ENCODE measurements at regions of chr4 and their contacts with region 1.

Region 1: GRCh38 chr4:44760142-44760898 is 34.0 kb upstream of the GNPDA2 start:
- DNase-seq: peak in 1 of 2 experiments; percentile 32
- H3K4me3 ChIP-seq: no peak overlapping the region
- H3K4me3 Mint-ChIP-seq: no peak overlapping the region
- H3K27ac Mint-ChIP-seq: no peak overlapping the region
- H3K4me1 ChIP-seq: no peaks in the 10 kb centered on the region
- H3K4me1 Mint-ChIP-seq: no peaks in the 10 kb centered on the region
- H3K27me3 ChIP-seq: no peaks in the 10 kb centered on the region
- H3K27me3 Mint-ChIP-seq: peaks cover 2% of the 10 kb centered on the region
- CTCF ChIP-seq: peak; percentile 24 to 30

Region 2: DNA sequence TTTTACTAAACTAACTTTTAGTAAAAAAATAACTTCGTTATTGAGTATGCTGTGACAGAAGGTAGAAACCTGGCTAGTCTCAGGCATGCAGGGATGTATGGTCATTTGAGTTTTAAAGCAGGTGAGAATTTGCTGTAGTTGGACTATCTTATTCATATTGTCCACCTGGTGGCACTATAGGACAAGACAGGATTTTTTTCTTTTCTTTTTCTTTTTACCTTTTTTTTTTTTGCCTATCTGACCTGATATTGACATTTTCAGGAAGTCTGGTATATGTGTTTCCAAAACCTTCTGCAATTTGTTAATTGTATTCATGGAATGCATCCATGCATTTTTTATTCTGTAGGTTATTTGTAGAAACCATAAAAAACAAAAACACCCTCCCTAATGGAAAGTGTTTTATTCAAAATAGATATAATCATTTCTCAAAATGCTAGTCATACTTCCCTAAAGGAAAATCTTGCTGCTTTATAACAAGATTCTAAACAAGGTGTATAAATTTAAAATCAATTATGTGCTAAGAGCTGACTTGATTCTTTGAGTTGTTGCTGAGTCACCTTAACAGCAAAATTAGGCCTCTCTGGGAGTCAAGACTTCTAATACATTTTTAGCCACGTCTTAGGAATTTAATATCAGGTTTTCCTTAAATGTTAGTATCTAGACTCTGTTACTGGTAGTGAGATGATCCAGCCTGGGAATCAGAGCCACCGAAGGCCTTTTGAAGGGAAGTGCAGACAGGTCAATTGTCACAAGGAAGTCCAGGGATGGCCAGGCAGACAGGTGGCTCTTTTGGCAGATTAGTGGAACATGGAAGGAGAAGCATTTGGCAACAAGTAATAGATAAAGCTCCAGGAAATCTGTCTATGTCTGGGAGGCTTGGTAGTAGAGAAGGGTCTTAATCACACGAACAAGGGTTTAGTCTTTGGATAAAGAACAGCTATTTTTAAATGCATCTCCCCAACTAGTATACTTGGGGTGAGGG is 167.4 kb after region 1 on chr4:
- CTCF ChIA-PET with region 1: no interaction called
- POLR2A ChIA-PET with region 1: no interaction called
- intact Hi-C with region 1: loop called (anchors 2 kb)
- DNase-seq: peak in 1 of 2 experiments; percentile 21
- H3K4me3 ChIP-seq: no peak overlapping the region
- H3K4me3 Mint-ChIP-seq: no peak overlapping the region
- H3K27ac Mint-ChIP-seq: no peak overlapping the region
- H3K4me1 ChIP-seq: no peaks in the 10 kb centered on the region
- H3K4me1 Mint-ChIP-seq: no peaks in the 10 kb centered on the region
- H3K27me3 ChIP-seq: no peaks in the 10 kb centered on the region
- H3K27me3 Mint-ChIP-seq: peaks cover 2% of the 10 kb centered on the region
- CTCF ChIP-seq: peak; percentile 43 to 45

Region 3: DNA sequence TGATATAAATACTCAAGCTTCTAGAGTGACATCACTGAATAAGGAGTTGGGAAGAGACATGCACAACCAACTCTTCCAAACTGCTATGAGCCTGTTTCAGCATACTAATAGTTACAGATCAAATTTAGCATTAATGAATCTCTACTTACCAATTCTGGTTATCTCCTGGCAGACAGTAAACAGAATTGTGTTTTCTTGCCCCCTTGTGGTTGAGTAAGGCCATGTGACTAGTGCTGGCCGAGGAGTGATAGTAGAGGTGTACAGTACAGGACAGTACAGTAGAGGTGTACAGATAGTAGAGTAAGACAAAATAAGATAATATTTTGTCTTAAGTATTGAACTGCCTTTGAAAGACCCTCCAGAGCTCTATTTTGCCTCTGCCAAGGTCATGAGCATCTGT is 682.1 kb after region 1 on chr4:
- CTCF ChIA-PET with region 1: no interaction called
- POLR2A ChIA-PET with region 1: no interaction called
- intact Hi-C with region 1: loop called (anchors 1 kb)
- DNase-seq: peak in 1 of 2 experiments; percentile 24
- H3K4me3 ChIP-seq: no peak overlapping the region
- H3K4me3 Mint-ChIP-seq: no peak overlapping the region
- H3K27ac Mint-ChIP-seq: no peak overlapping the region
- H3K4me1 ChIP-seq: no peaks in the 10 kb centered on the region
- H3K4me1 Mint-ChIP-seq: no peaks in the 10 kb centered on the region
- H3K27me3 ChIP-seq: no peaks in the 10 kb centered on the region
- H3K27me3 Mint-ChIP-seq: peaks cover 4% of the 10 kb centered on the region
- CTCF ChIP-seq: peak; percentile 34 to 39